Activated CD4-positive, alpha-beta T cell treated with anti-CD3 and anti-CD28 coated beads, Interleukin-2, amount 10 ng/mL, durations not matched to agents 24 days and 14 days (primary cell): ENCODE measurements at regions of chrX and their contacts with region 1.

Region 1: GRCh38 chrX:30635630-30636029 is 17.6 kb upstream of the GK start:
- DNase-seq: peak; percentile 66
- H3K4me3 Mint-ChIP-seq: no peak overlapping the region
- H3K27ac Mint-ChIP-seq: no peak overlapping the region
- H3K4me1 Mint-ChIP-seq: peaks cover 2% of the 10 kb centered on the region
- H3K27me3 Mint-ChIP-seq: no peaks in the 10 kb centered on the region

Region 2: GRCh38 chrX:30622361-30622760 is 13.3 kb before region 1 on chrX:
- intact Hi-C with region 1: loop called (anchors 1 kb)
- DNase-seq: no peak
- H3K4me3 Mint-ChIP-seq: no peak overlapping the region
- H3K27ac Mint-ChIP-seq: no peak overlapping the region
- H3K4me1 Mint-ChIP-seq: no peaks in the 10 kb centered on the region
- H3K27me3 Mint-ChIP-seq: peaks cover 1% of the 10 kb centered on the region

Region 3: DNA sequence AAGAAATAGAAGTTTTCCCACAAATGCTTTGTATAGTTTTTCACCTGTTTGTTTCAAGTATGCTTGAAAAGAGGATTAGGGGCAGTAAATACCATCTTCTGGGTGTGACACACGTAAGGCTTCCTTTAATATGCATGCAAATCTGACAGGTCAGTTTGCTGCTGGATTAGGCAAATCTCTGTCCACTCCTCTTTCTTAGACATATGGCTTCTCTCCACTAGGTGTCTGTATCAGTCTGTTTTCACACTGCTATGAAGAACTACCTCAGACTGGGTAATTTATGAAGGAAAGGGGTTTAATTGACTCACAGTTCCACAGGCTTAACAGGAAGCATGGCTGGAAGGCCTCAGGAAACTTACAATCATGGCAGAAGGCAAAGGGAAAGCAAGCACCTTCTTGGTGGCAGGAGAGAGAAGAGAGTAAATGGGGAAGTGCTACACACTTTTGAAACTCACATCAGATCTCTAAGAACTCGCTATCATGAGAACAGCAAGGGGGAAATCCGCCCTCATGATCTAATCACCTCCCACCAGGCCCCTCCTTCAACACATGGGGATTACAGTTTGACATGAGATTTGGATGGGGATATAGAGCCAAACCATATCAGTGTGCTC is 186.5 kb after region 1 on chrX:
- intact Hi-C with region 1: loop called (anchors 5 kb)
- DNase-seq: no peak
- H3K4me3 Mint-ChIP-seq: no peak overlapping the region
- H3K27ac Mint-ChIP-seq: no peak overlapping the region
- H3K4me1 Mint-ChIP-seq: peaks cover 16% of the 10 kb centered on the region
- H3K27me3 Mint-ChIP-seq: peaks cover 2% of the 10 kb centered on the region

Region 4: GRCh38 chrX:31070057-31070468 is 434.4 kb after region 1 on chrX:
- intact Hi-C with region 1: no loop called
- DNase-seq: peak; percentile 56
- H3K4me3 Mint-ChIP-seq: no peak overlapping the region
- H3K27ac Mint-ChIP-seq: no peak overlapping the region
- H3K4me1 Mint-ChIP-seq: peaks cover 9% of the 10 kb centered on the region
- H3K27me3 Mint-ChIP-seq: no peaks in the 10 kb centered on the region

Region 5: DNA sequence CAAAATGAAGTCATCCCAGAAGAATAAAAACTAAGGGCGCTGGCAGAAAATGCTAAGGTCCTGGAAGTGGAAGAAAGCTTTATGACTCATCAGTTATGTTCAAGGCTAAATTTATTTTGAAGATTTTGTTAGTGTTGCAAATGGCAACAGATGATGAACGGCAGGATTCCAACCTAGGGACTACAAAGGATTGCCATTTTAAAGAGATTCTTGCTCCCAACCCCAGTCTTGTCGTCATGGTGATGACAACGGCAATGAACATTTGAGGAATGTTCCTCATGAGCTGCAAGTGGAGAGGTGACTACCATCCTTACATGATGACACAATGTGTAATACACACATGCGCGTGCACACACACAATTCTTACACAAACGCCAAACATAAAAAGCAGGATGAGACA is 490.6 kb after region 1 on chrX:
- intact Hi-C with region 1: no loop called
- DNase-seq: no peak
- H3K4me3 Mint-ChIP-seq: no peak overlapping the region
- H3K27ac Mint-ChIP-seq: no peak overlapping the region
- H3K4me1 Mint-ChIP-seq: no peaks in the 10 kb centered on the region
- H3K27me3 Mint-ChIP-seq: no peaks in the 10 kb centered on the region